ENCODE measurements at regions of chr16 and their contacts with region 1.

Region 1: GRCh38 chr16:84970447-84971127 is 40.7 kb downstream of the ZDHHC7 start:
- DNase-seq: peak; percentile 85
- H3K4me3 ChIP-seq: no peak overlapping the region; a peak in 1 of 4 replicates
- H3K27ac ChIP-seq: no peak overlapping the region
- H3K4me1 ChIP-seq: peaks cover 2 to 4% of the 10 kb centered on the region in 2 experiments; a peak in 1 of 4 replicates
- H3K27me3 ChIP-seq: no peaks in the 10 kb centered on the region
- CTCF ChIP-seq: peak; percentile 97
- EP300 ChIP-seq: no peak
- RAD21 ChIP-seq: peak; percentile 90

Region 2: DNA sequence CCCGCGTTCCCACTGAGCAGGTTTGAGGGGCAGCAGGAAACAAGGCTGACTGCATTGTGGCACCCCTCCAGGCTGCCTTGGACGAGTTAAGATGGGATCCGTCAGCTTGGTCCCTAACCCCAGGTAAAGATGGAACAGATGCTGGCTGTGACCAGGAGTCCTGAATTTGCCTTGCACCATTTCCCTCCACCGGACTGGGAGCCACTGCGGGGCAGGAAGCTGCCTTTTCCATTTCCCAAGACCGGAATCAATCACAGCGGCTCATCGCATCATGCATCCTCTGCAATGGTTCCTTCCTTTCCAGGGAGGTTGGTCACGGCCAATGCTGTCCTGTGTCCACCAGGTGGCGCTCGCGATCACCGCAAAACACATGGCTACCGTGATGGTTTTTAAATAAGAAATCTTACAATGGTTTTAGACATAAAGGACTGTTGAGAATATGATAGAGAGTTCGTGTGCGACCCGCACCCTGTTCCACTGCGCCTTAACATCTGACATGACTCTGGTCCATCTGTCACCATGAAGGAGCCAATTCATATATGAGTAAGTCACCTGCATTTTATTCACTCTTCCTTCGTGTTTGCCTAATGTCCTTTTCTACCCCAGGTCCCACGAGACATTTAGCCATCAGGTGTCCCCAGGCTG is 459.3 kb before region 1 on chr16:
- CTCF ChIA-PET with region 1: interaction called, 12 read pairs
- POLR2A ChIA-PET with region 1: no interaction called
- DNase-seq: peak; percentile 85
- H3K4me3 ChIP-seq: peak overlapping the region; percentile 23 to 26; a peak in 3 of 4 replicates
- H3K27ac ChIP-seq: no peak overlapping the region
- H3K4me1 ChIP-seq: peaks cover 0 to 8% of the 10 kb centered on the region in 2 experiments; a peak in 1 of 4 replicates
- H3K27me3 ChIP-seq: no peaks in the 10 kb centered on the region
- CTCF ChIP-seq: peak; percentile 95
- EP300 ChIP-seq: no peak
- RAD21 ChIP-seq: peak; percentile 91

Region 3: DNA sequence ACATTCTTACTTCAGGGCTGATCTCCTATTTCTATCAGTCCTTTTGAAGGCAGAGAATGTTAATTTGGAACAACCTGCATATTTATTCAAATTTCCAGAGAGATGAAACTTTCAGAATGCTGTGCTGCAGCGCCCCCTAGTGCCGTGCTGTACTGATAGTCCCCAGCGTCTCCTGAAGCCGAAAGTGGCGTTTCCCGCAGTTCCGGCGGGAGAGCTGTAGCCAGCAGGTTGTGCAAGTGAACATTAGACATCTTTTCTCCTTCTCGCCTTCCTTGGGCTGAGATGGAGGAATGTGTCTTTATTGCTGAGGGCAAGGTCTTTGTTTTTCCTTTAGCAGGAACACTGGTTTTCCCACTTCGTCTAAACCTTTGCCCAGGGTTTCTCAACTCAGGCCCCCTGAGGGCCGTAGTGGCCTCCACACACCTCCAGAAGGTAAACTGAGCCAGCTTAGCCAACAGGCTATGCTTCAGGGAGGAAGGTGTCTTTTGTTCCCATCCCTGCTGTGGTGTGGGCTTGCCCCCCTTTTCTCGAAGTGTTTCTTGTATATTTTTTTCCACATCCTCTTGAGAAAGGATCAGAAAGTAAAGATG is 244.4 kb before region 1 on chr16:
- CTCF ChIA-PET with region 1: interaction called, 25 read pairs
- POLR2A ChIA-PET with region 1: no interaction called
- DNase-seq: peak; percentile 68
- H3K4me3 ChIP-seq: peak overlapping the region in 1 of 2 experiments; percentile 45; a peak in 1 of 4 replicates
- H3K27ac ChIP-seq: no peak overlapping the region
- H3K4me1 ChIP-seq: peaks cover 28 to 34% of the 10 kb centered on the region in 2 experiments; a peak in 3 of 4 replicates
- H3K27me3 ChIP-seq: no peaks in the 10 kb centered on the region
- CTCF ChIP-seq: peak; percentile 97
- EP300 ChIP-seq: no peak
- RAD21 ChIP-seq: peak; percentile 88

Region 4: GRCh38 chr16:84754353-84754856 is 216.2 kb before region 1 on chr16:
- CTCF ChIA-PET with region 1: interaction called, 428 read pairs
- POLR2A ChIA-PET with region 1: no interaction called
- DNase-seq: peak; percentile 62
- H3K4me3 ChIP-seq: peak overlapping the region in 1 of 2 experiments; percentile 4; a peak in 1 of 4 replicates
- H3K27ac ChIP-seq: no peak overlapping the region
- H3K4me1 ChIP-seq: no peaks in the 10 kb centered on the region; a peak in 1 of 4 replicates
- H3K27me3 ChIP-seq: no peaks in the 10 kb centered on the region
- CTCF ChIP-seq: peak; percentile 85
- EP300 ChIP-seq: no peak
- RAD21 ChIP-seq: peak; percentile 93

Region 5: DNA sequence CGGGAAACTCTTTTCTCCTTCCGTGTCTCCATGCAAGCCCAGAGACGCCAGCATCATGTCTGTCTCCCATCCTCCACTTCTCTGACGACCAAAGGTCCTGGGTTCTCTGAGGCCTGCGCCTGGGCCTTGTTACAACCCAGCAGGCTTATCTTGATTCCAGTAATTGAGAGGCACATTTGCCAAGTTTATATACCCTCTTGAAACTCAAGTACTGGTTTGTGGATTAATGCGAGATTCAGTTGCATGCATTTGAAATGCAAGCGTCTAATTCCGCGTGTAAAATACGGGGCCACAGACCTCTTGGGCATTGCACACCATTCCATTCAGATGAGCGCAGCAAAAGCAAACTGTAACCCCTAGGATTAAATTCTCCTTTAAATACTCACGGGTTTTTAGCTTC is 179.5 kb before region 1 on chr16:
- CTCF ChIA-PET with region 1: interaction called, 10 read pairs
- POLR2A ChIA-PET with region 1: no interaction called
- DNase-seq: no peak
- H3K4me3 ChIP-seq: no peak overlapping the region
- H3K27ac ChIP-seq: no peak overlapping the region
- H3K4me1 ChIP-seq: peaks cover 2 to 30% of the 10 kb centered on the region in 2 experiments; a peak in 3 of 4 replicates
- H3K27me3 ChIP-seq: no peaks in the 10 kb centered on the region
- CTCF ChIP-seq: no peak
- EP300 ChIP-seq: no peak
- RAD21 ChIP-seq: no peak

Region 6: GRCh38 chr16:84952335-84953189 is 18.0 kb before region 1 on chr16:
- CTCF ChIA-PET with region 1: interaction called, 182 read pairs
- POLR2A ChIA-PET with region 1: no interaction called
- DNase-seq: peak; percentile 85
- H3K4me3 ChIP-seq: peak overlapping the region in 1 of 2 experiments; percentile 32; a peak in 1 of 4 replicates
- H3K27ac ChIP-seq: peak overlapping the region; percentile 22 to 84; a peak in 3 of 4 replicates
- H3K4me1 ChIP-seq: peaks cover 4 to 14% of the 10 kb centered on the region in 2 experiments; a peak in 2 of 4 replicates
- H3K27me3 ChIP-seq: no peaks in the 10 kb centered on the region
- CTCF ChIP-seq: peak; percentile 88
- EP300 ChIP-seq: peak in 1 of 2 experiments; percentile 71; a peak in 2 of 4 replicates
- RAD21 ChIP-seq: peak; percentile 82

Region 7: GRCh38 chr16:85004559-85005205 is 34.1 kb after region 1 on chr16:
- CTCF ChIA-PET with region 1: interaction called, 12 read pairs
- POLR2A ChIA-PET with region 1: no interaction called
- DNase-seq: no peak
- H3K4me3 ChIP-seq: peak overlapping the region in 1 of 2 experiments; percentile 24; a peak in 2 of 4 replicates
- H3K27ac ChIP-seq: peak overlapping the region; percentile 62 to 89
- H3K4me1 ChIP-seq: peaks cover 13 to 25% of the 10 kb centered on the region in 2 experiments; a peak in 3 of 4 replicates
- H3K27me3 ChIP-seq: no peaks in the 10 kb centered on the region
- CTCF ChIP-seq: 0 out of 2 replicates have a peak, but pooled peaks have one; percentile 6
- EP300 ChIP-seq: peak in 1 of 2 experiments; percentile 49; a peak in 1 of 4 replicates
- RAD21 ChIP-seq: no peak

Region 8: GRCh38 chr16:85234310-85235204 is 264.0 kb after region 1 on chr16:
- CTCF ChIA-PET with region 1: no interaction called
- POLR2A ChIA-PET with region 1: no interaction called
- DNase-seq: peak; percentile 96
- H3K4me3 ChIP-seq: peak overlapping the region; percentile 44 to 61
- H3K27ac ChIP-seq: peak overlapping the region; percentile 60 to 90; a peak in 3 of 4 replicates
- H3K4me1 ChIP-seq: peaks cover 21 to 45% of the 10 kb centered on the region in 2 experiments; a peak in 3 of 4 replicates
- H3K27me3 ChIP-seq: no peaks in the 10 kb centered on the region
- CTCF ChIP-seq: no peak
- EP300 ChIP-seq: peak in 1 of 2 experiments; percentile 9; a peak in 1 of 4 replicates
- RAD21 ChIP-seq: no peak; the same call in 1 of the 2 replicates